PC-3 (cell line): ENCODE measurements at regions of chr7 and their contacts with region 1.

Region 1: GRCh38 chr7:127287133-127287532 is 34.4 kb upstream of the GRM8 start:
- DNase-seq: no peak
- ATAC-seq: no peak
- H3K4me3 ChIP-seq: no peak overlapping the region
- H3K27ac ChIP-seq: no peak overlapping the region
- H3K4me1 ChIP-seq: no peaks in the 10 kb centered on the region
- H3K27me3 ChIP-seq: peaks cover 12% of the 10 kb centered on the region; the same call in 1 of the 2 replicates
- CTCF ChIP-seq: no peak

Region 2: DNA sequence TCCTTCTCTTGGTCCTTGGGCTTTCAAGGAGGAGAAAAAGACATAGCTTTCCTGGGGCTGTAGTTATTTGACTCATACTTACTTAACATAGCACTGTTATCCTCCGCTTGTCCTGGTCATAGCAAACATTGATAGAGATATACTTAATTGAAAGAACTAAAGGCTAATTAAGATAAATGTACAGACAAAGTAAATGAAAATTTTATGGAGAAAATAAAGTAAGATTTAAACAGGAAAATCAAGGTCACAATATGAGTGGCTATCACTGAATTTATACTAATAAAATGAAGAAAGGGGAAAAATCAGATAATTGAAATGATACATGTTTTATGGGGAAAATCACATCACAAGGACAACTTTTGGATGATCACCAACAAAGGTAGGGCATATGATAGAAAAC is 884.1 kb before region 1 on chr7:
- CTCF ChIA-PET with region 1: no interaction called
- POLR2A ChIA-PET with region 1: no interaction called
- intact Hi-C with region 1: no loop called
- DNase-seq: no peak
- ATAC-seq: no peak
- H3K4me3 ChIP-seq: no peak overlapping the region
- H3K27ac ChIP-seq: no peak overlapping the region
- H3K4me1 ChIP-seq: no peaks in the 10 kb centered on the region
- H3K27me3 ChIP-seq: no peaks in the 10 kb centered on the region
- CTCF ChIP-seq: no peak

Region 3: DNA sequence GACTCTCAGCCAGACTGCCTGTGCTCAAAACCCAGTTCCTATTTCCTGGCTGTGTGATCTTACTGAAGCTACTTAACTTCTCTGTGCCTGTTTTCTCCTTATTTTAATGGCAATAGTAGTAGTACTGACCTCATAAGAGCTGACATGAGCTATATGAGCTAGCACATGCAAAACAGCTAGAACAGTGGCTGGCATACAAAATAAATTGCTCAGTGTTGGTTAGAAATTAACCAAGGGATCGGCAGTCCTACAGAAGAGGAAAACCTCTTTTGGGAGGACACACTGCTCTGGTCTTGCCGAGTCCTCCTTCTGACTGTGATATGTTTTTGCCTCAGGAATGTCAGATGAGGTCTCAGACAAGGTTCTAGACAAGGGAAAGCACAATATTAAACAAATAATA is 357.0 kb before region 1 on chr7:
- CTCF ChIA-PET with region 1: interaction called, 10 read pairs
- POLR2A ChIA-PET with region 1: no interaction called
- intact Hi-C with region 1: no loop called
- DNase-seq: no peak
- ATAC-seq: no peak
- H3K4me3 ChIP-seq: no peak overlapping the region
- H3K27ac ChIP-seq: no peak overlapping the region
- H3K4me1 ChIP-seq: no peaks in the 10 kb centered on the region
- H3K27me3 ChIP-seq: no peaks in the 10 kb centered on the region
- CTCF ChIP-seq: no peak

Region 4: DNA sequence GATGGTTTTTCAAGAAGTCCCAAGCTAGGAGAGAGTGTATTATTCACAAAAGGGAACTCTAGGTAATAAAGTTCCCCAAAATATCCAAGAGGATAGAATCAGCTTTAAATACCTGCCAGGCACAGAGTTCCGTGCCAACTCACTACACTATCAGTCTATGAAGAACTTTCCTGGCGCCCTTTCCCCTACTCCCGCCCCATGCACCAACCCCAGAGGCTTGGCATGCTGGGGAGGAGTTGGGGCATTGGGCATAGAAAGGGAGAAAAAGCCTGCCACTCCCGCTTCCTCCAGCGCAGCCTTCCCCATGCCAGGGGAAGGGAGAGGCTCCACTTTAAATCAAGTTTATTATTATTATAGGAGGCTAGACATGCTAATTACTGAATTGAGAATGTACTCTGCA is 50.4 kb after region 1 on chr7:
- CTCF ChIA-PET with region 1: interaction called, 14 read pairs
- POLR2A ChIA-PET with region 1: no interaction called
- intact Hi-C with region 1: no loop called
- DNase-seq: no peak
- ATAC-seq: no peak; the same call in 1 of the 2 replicates
- H3K4me3 ChIP-seq: no peak overlapping the region
- H3K27ac ChIP-seq: no peak overlapping the region
- H3K4me1 ChIP-seq: no peaks in the 10 kb centered on the region
- H3K27me3 ChIP-seq: peaks cover 8% of the 10 kb centered on the region
- CTCF ChIP-seq: no peak